Naive thymus-derived CD4-positive, alpha-beta T cell (primary cell): ENCODE measurements at regions of chr5 and their contacts with region 1.

Region 1: GRCh38 chr5:148383564-148384379 is at the start of gene FBXO38:
- DNase-seq: peak; percentile 88 to 99 (median 98)
- ATAC-seq: peak; percentile 97
- H3K4me3 ChIP-seq: peak within 1 kb of the TSS; percentile 66
- H3K4me3 Mint-ChIP-seq: peak within 1 kb of the TSS; percentile 84 to 97 (median 88)
- H3K27ac ChIP-seq: peak within 1 kb of the TSS; percentile 91
- H3K27ac Mint-ChIP-seq: peak within 1 kb of the TSS; percentile 93 to 99 (median 98)
- H3K4me1 ChIP-seq: peaks cover 18 to 41% of the 10 kb centered on the region in 2 donors
- H3K4me1 Mint-ChIP-seq: peaks cover 43 to 78% (median 71%) of the 10 kb centered on the region in 7 donors
- H3K27me3 ChIP-seq: no peaks in the 10 kb centered on the region
- H3K27me3 Mint-ChIP-seq: no peaks in the 10 kb centered on the region
- total RNA-seq, gene FBXO38: 59.2 to 80.0 (median 65.6) TPM

Region 2: DNA sequence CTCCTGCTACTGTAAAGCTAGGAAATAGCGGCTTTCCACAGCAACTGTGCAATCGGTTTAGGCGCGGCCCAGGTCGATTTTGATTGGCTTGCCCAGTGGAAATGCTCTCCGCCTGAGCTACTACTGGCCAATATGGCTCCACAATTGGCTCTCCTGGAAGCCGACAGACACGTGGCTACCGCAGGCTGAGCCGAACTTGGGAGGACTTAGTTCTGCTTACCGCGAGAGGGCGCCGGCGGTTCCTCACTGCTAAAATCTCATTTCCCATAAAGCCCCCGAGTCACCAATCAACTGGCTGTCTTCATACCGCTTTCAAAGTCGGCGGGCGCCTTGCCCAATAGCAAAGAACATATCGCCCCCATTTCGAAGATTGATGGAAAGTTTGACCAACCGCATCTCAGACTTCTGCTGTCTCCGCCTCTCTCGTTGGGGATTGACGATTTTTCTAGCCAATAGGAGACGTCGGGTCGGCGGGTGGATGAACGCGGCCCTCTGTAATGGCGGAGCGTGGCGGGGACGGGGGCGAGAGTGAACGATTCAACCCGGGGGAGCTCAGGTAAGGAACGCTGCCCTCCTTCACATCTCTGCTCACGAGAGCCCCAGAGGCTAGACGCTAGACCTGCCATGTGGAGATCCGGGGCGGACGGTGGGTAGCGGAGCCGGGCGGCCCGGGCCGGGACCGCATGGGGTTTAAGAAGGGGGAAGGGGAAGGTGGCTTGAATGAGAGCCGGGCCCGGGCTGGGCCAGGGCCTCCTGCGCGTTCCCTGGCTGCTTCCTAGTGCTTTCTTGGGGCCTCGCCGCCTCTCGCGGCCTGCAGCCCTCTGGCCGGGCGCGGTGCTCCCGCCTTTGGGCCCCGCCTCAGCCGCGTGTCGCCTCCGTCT is 1936.7 kb before region 1 on chr5 and contains the start of gene TCERG1:
- CTCF ChIA-PET with region 1: no interaction called
- POLR2A ChIA-PET with region 1: no interaction called
- intact Hi-C with region 1: loop called (anchors 1 kb)
- DNase-seq: peak; percentile 87 to 99 (median 98)
- ATAC-seq: peak; percentile 94
- H3K4me3 ChIP-seq: peak within 1 kb of the TSS; percentile 64
- H3K4me3 Mint-ChIP-seq: peak within 1 kb of the TSS; percentile 83 to 100 (median 99)
- H3K27ac ChIP-seq: peak within 1 kb of the TSS; percentile 96
- H3K27ac Mint-ChIP-seq: peak within 1 kb of the TSS; percentile 91 to 100 (median 97)
- H3K4me1 ChIP-seq: peaks cover 14 to 19% of the 10 kb centered on the region in 2 donors
- H3K4me1 Mint-ChIP-seq: peaks cover 24 to 51% (median 43%) of the 10 kb centered on the region in 7 donors
- H3K27me3 ChIP-seq: no peaks in the 10 kb centered on the region
- H3K27me3 Mint-ChIP-seq: peaks cover 0 to 10% (median 0%) of the 10 kb centered on the region in 5 donors
- total RNA-seq, gene TCERG1: 75.2 to 101 (median 83.8) TPM

Region 3: DNA sequence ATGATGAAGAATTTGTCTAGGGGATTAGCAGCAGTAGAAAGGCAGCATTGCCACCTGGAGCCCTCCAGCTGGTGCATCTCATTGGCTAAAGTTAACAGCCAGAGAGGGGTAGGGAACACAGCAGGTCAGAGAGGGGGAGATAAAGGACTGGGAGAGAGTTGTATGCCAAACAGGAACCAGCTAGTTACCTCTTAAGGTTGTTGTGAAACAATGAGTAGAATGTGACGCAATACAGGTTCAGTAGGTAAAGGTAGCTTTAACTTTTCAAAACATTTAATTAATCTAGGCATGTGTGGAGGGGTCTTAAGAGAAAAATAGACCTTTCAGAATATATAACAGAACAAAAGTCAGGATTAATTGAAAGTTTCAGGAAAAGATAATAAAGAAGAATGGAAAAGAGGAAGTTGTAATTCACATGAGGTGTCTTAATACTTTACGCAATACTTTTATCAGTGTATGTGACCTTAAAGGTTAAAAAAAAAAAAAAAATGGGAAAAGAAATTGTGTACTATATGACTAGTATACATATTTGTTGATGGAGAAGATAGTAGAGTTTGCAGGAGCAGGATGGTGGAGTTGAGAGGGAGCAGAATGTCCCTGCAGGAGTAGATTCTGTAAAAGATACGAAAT is 14.3 kb after region 1 on chr5:
- CTCF ChIA-PET with region 1: no interaction called
- POLR2A ChIA-PET with region 1: interaction called, 4 read pairs
- intact Hi-C with region 1: loop called (anchors 1 kb)
- DNase-seq: no peak
- ATAC-seq: no peak
- H3K4me3 ChIP-seq: no peak overlapping the region
- H3K4me3 Mint-ChIP-seq: no peak overlapping the region
- H3K27ac ChIP-seq: no peak overlapping the region
- H3K27ac Mint-ChIP-seq: peak overlapping the region in 6 of 9 donors; percentile 11 to 82 (median 40)
- H3K4me1 ChIP-seq: no peaks in the 10 kb centered on the region
- H3K4me1 Mint-ChIP-seq: peaks cover 32 to 80% (median 58%) of the 10 kb centered on the region in 7 donors
- H3K27me3 ChIP-seq: no peaks in the 10 kb centered on the region
- H3K27me3 Mint-ChIP-seq: no peaks in the 10 kb centered on the region

Region 4: DNA sequence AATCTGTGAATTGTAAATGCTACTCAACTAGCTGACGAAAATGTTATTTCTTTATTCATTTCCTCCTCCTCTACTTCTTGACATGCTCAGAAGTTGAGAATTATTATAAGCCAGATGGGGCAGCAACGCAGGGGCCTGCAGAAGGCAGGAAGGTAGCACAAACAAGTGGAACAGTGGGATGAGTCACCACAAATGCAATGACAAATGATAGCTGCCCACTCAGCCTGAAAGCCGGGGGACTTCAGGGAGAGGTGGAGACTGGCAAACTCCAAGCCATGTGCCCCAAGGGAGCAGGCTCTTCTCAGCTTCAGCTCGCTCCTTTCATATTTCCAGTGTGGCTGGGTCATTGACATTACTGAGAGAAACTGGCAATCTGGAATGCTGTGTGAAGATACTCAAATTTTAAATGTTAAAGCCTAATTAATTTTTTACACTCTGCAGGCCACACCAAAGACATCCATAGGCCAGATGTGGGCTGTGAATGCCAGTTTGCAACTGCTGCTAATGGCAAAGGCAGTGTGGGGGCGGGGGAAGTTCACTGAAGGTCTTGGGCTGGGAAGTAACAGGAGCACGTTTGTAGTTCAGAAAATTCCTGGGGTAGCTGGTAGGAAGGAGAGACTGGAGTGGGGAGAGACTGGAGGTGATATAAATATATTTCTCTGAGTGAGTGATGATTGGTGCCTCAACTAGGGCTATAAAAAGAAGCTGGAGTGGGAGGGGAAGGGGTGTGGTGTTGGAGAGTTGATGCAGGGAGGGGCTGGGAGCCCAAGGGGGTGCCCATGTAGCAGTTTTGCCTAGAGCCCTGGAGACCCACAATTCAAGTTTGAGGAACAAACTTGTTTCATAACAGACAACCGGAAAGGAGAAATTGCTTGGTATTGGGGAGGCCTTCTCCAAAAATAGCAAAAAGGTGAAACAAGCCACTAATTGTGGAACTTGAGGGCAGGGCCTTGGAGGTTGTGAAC is 421.8 kb after region 1 on chr5:
- CTCF ChIA-PET with region 1: no interaction called
- POLR2A ChIA-PET with region 1: no interaction called
- intact Hi-C with region 1: loop called (anchors 1 kb)
- DNase-seq: peak in 1 of 9 donors; percentile 39
- ATAC-seq: peak; percentile 4
- H3K4me3 ChIP-seq: no peak overlapping the region
- H3K4me3 Mint-ChIP-seq: no peak overlapping the region
- H3K27ac ChIP-seq: no peak overlapping the region
- H3K27ac Mint-ChIP-seq: peak overlapping the region in 4 of 9 donors; percentile 13 to 65 (median 28)
- H3K4me1 ChIP-seq: peaks cover 10 to 12% of the 10 kb centered on the region in 2 donors
- H3K4me1 Mint-ChIP-seq: peaks cover 20 to 35% (median 26%) of the 10 kb centered on the region in 7 donors
- H3K27me3 ChIP-seq: no peaks in the 10 kb centered on the region
- H3K27me3 Mint-ChIP-seq: peaks cover 0 to 5% (median 0%) of the 10 kb centered on the region in 5 donors

Region 5: GRCh38 chr5:149240354-149240998 is 856.7 kb after region 1 on chr5:
- CTCF ChIA-PET with region 1: no interaction called
- POLR2A ChIA-PET with region 1: no interaction called
- intact Hi-C with region 1: loop called in 1 of 2 experiments (anchors 1 kb)
- DNase-seq: peak; percentile 46 to 94 (median 90)
- ATAC-seq: peak; percentile 93
- H3K4me3 ChIP-seq: peak overlapping the region; percentile 2
- H3K4me3 Mint-ChIP-seq: peak overlapping the region; percentile 38 to 79 (median 66)
- H3K27ac ChIP-seq: peak overlapping the region; percentile 67
- H3K27ac Mint-ChIP-seq: peak overlapping the region; percentile 83 to 98 (median 93)
- H3K4me1 ChIP-seq: peaks cover 21 to 39% of the 10 kb centered on the region in 2 donors
- H3K4me1 Mint-ChIP-seq: peaks cover 8 to 71% (median 43%) of the 10 kb centered on the region in 7 donors
- H3K27me3 ChIP-seq: no peaks in the 10 kb centered on the region
- H3K27me3 Mint-ChIP-seq: peaks cover 0 to 23% (median 1%) of the 10 kb centered on the region in 5 donors

Region 6: DNA sequence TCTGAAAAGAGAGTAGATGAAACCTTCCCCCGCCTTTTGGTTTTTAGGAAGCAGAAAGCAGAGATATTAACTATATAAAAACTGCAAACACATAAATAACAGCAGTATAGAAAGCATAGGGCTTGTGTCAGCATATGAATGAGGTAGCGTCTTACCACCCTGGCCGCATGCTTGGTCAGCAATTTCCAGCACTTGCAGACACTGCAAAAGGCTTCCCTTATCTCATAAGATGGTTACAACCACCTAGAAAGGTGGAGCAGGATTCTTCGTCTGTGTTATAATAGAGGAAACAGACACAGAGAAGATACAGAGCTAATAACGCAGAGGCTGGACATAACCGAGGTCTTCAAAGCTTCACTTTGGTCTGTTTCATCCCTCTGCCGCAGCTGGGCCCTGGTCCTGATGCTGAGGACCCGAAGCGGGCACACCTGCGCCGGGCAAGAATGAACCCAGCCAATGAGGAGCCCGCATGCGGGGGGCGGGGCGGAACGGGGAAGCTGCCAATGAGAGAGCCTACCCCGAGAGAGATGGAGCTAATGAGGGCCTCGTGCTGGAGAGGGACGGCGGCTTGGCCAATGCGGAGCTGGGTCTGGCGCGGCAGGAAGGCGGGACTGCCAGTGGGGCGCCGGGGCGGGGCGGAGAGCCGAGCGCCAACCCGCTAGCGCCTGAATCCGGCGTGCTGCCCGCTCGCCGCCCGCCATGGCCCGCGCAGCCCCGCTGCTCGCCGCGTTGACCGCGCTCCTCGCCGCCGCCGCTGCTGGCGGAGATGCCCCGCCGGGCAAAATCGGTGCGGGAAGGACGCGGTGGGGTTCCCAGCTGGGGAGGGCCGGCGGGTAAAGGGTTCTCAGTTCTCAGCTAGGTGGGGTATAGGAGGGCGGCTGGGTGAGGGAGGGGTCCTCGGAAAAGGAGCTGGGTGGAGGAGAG is 973.9 kb after region 1 on chr5 and contains the start of gene PCYOX1L:
- CTCF ChIA-PET with region 1: no interaction called
- POLR2A ChIA-PET with region 1: no interaction called
- intact Hi-C with region 1: loop called in 1 of 2 experiments (anchors 2 kb)
- DNase-seq: peak; percentile 88 to 98 (median 94)
- ATAC-seq: peak; percentile 99
- H3K4me3 ChIP-seq: peak within 1 kb of the TSS; percentile 80
- H3K4me3 Mint-ChIP-seq: peak within 1 kb of the TSS; percentile 80 to 99 (median 94)
- H3K27ac ChIP-seq: peak within 1 kb of the TSS; percentile 83
- H3K27ac Mint-ChIP-seq: peak within 1 kb of the TSS; percentile 83 to 96 (median 92)
- H3K4me1 ChIP-seq: peaks cover 15 to 36% of the 10 kb centered on the region in 2 donors
- H3K4me1 Mint-ChIP-seq: peaks cover 41 to 82% (median 65%) of the 10 kb centered on the region in 7 donors
- H3K27me3 ChIP-seq: no peaks in the 10 kb centered on the region
- H3K27me3 Mint-ChIP-seq: no peaks in the 10 kb centered on the region
- total RNA-seq, gene PCYOX1L: 29.7 to 53.7 (median 36.3) TPM

Region 7: GRCh38 chr5:149960272-149961185 is 1576.8 kb after region 1 on chr5 and contains the start of gene SLC26A2:
- CTCF ChIA-PET with region 1: no interaction called
- POLR2A ChIA-PET with region 1: interaction called, 3 read pairs
- intact Hi-C with region 1: loop called (anchors 5 to 10 kb)
- DNase-seq: peak; percentile 78 to 92 (median 91)
- ATAC-seq: peak; percentile 99
- H3K4me3 ChIP-seq: peak within 1 kb of the TSS; percentile 98
- H3K4me3 Mint-ChIP-seq: peak within 1 kb of the TSS; percentile 90 to 100 (median 96)
- H3K27ac ChIP-seq: peak within 1 kb of the TSS; percentile 77
- H3K27ac Mint-ChIP-seq: peak within 1 kb of the TSS; percentile 94 to 98 (median 97)
- H3K4me1 ChIP-seq: peaks cover 16 to 28% of the 10 kb centered on the region in 2 donors
- H3K4me1 Mint-ChIP-seq: peaks cover 14 to 43% (median 37%) of the 10 kb centered on the region in 7 donors
- H3K27me3 ChIP-seq: no peaks in the 10 kb centered on the region
- H3K27me3 Mint-ChIP-seq: no peaks in the 10 kb centered on the region
- total RNA-seq, gene SLC26A2: 5.2 to 16.5 (median 9.6) TPM